HepG2 (cell line): ENCODE measurements at regions of chr15 and their contacts with region 1.

Region 1: GRCh38 chr15:57340682-57341259 is 35.5 kb upstream of the CGNL1 start:
- DNase-seq: peak; percentile 42
- ATAC-seq: peak; percentile 55
- H3K4me3 ChIP-seq: no peak overlapping the region
- H3K27ac ChIP-seq: no peak overlapping the region
- H3K4me1 ChIP-seq: peaks cover 45% of the 10 kb centered on the region
- H3K27me3 ChIP-seq: peaks cover 0 to 25% of the 10 kb centered on the region in 2 experiments; a peak in 3 of 5 replicates
- CTCF ChIP-seq: peak; percentile 84
- EP300 ChIP-seq: no peak
- POLR2A ChIP-seq: no peak
- RAD21 ChIP-seq: peak; percentile 91

Region 2: DNA sequence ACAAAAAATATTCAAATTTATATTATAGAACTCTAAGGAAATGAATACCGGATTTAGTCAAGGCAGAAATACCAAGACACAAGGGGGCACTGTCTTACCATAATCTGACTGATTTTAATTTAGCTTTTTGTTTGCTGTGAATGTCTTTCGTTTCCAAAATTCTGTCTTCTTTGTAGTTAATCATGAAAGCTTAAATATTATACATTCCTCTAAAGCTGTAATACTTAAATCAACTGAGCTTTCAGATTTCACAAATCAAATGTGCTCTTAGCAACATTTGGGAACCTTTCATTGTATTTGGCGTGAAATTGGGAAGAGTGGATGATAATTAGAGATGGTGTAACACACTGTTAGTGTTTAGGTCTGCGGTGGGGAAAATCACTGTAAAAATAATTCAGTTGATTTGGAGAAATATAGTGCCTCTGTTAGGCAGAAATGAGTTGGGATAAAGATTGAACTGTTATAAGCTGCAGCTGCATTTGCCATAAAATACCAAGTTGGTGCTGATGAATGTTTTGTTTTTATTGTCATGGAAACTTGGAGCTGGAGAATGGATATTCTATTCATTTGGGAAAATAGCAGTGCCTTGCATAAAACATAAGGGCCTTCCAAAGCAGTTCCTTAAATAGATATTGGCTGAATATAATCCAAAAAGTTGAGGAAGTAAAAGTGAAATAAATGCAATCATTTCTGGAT is 194.1 kb before region 1 on chr15:
- CTCF ChIA-PET with region 1: interaction called, 3 read pairs
- POLR2A ChIA-PET with region 1: no interaction called
- in situ Hi-C with region 1: no loop called
- intact Hi-C with region 1: loop called (anchors 10 kb)
- DNase-seq: peak; percentile 9
- ATAC-seq: no peak
- H3K4me3 ChIP-seq: no peak overlapping the region
- H3K27ac ChIP-seq: no peak overlapping the region
- H3K4me1 ChIP-seq: no peaks in the 10 kb centered on the region
- H3K27me3 ChIP-seq: no peaks in the 10 kb centered on the region
- CTCF ChIP-seq: peak; percentile 44
- EP300 ChIP-seq: no peak
- POLR2A ChIP-seq: no peak
- RAD21 ChIP-seq: no peak

Region 3: GRCh38 chr15:57213862-57214261 is 126.9 kb before region 1 on chr15:
- CTCF ChIA-PET with region 1: no interaction called
- POLR2A ChIA-PET with region 1: no interaction called
- in situ Hi-C with region 1: no loop called
- intact Hi-C with region 1: no loop called
- DNase-seq: peak; percentile 41
- ATAC-seq: peak; percentile 67
- H3K4me3 ChIP-seq: no peak overlapping the region
- H3K27ac ChIP-seq: no peak overlapping the region
- H3K4me1 ChIP-seq: peaks cover 12% of the 10 kb centered on the region
- H3K27me3 ChIP-seq: no peaks in the 10 kb centered on the region
- CTCF ChIP-seq: peak; percentile 67
- EP300 ChIP-seq: no peak
- POLR2A ChIP-seq: no peak
- RAD21 ChIP-seq: no peak; the same call in 1 of the 2 replicates

Region 4: DNA sequence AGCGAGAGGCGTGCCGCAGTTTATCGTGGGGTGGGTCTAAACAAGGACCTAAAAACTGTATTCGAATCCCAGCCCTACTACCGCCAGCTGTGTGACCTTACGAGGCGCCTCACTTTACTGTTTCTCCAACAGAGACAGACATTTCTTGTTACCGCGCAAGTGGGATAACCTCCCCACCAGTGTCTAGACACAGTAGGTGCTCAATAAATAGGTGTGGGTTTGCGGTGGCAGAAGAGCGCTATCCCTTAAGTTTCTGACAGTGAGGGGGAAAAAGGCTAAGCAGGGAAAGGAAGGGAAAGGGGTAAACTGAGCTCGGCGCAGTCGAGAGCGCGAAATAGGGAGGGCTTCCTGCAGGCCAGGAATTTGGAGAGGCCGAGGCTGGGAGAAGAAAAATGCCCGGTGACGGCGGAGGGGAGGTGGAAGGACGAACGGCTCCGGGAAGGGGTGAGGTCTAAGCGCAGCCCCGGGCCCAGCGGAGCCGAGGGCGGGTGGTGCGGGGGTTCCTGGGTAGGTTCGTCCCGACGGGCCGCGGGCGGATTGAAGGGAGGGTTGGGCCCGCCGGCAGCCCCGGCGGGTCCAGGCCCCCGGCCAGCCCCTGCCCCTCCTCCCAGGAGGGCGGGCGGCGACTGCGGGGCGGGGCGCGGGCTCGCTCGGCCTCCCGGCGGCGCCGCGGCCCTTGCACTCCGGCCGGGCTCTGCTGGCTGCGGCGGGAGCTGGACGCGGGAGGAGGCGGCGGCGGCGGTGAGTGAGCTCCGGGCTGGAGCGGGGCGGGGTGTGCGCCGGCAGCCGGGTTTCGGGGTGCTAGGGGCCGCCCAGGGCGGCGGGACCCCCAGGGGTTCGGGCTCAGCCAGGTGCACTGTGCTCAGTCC is 35.3 kb after region 1 on chr15 and contains the start of gene CGNL1:
- CTCF ChIA-PET with region 1: interaction called, 3 read pairs
- POLR2A ChIA-PET with region 1: no interaction called
- in situ Hi-C with region 1: no loop called
- intact Hi-C with region 1: loop called (anchors 5 kb)
- DNase-seq: peak; percentile 14
- ATAC-seq: peak; percentile 89
- H3K4me3 ChIP-seq: peak within 1 kb of the TSS; percentile 67 to 85 (median 76)
- H3K27ac ChIP-seq: peak within 1 kb of the TSS; percentile 55
- H3K4me1 ChIP-seq: peaks cover 53% of the 10 kb centered on the region
- H3K27me3 ChIP-seq: peaks cover 3 to 12% of the 10 kb centered on the region in 2 experiments; a peak in 2 of 5 replicates
- CTCF ChIP-seq: no peak
- EP300 ChIP-seq: no peak
- POLR2A ChIP-seq: peak in 1 of 2 experiments; percentile 50; a peak in 2 of 4 replicates
- RAD21 ChIP-seq: no peak
- total RNA-seq, gene CGNL1: 15.6 and 16.2 TPM in 2 replicates

Region 5: GRCh38 chr15:57541805-57542504 is 201.2 kb after region 1 on chr15:
- CTCF ChIA-PET with region 1: interaction called, 21 read pairs
- POLR2A ChIA-PET with region 1: no interaction called
- in situ Hi-C with region 1: loop called (anchors 5 kb)
- intact Hi-C with region 1: loop called (anchors 1 kb)
- DNase-seq: peak; percentile 44
- ATAC-seq: peak; percentile 79
- H3K4me3 ChIP-seq: no peak overlapping the region
- H3K27ac ChIP-seq: no peak overlapping the region
- H3K4me1 ChIP-seq: peaks cover 14% of the 10 kb centered on the region
- H3K27me3 ChIP-seq: no peaks in the 10 kb centered on the region
- CTCF ChIP-seq: peak; percentile 74
- EP300 ChIP-seq: no peak
- POLR2A ChIP-seq: no peak
- RAD21 ChIP-seq: peak; percentile 61; the same call in 1 of the 2 replicates